ENCODE measurements at regions of chr14 and their contacts with region 1.

Region 1: GRCh38 chr14:53539489-53540126 is 386.5 kb upstream of the DDHD1 start:
- DNase-seq: peak; percentile 82 to 94 (median 89)
- H3K4me3 ChIP-seq: no peak overlapping the region
- H3K27ac ChIP-seq: no peak overlapping the region
- H3K4me1 ChIP-seq: peaks cover 0 to 4% (median 3%) of the 10 kb centered on the region in 3 donors
- H3K27me3 ChIP-seq: no peaks in the 10 kb centered on the region
- CTCF ChIP-seq: peak; percentile 88

Region 2: DNA sequence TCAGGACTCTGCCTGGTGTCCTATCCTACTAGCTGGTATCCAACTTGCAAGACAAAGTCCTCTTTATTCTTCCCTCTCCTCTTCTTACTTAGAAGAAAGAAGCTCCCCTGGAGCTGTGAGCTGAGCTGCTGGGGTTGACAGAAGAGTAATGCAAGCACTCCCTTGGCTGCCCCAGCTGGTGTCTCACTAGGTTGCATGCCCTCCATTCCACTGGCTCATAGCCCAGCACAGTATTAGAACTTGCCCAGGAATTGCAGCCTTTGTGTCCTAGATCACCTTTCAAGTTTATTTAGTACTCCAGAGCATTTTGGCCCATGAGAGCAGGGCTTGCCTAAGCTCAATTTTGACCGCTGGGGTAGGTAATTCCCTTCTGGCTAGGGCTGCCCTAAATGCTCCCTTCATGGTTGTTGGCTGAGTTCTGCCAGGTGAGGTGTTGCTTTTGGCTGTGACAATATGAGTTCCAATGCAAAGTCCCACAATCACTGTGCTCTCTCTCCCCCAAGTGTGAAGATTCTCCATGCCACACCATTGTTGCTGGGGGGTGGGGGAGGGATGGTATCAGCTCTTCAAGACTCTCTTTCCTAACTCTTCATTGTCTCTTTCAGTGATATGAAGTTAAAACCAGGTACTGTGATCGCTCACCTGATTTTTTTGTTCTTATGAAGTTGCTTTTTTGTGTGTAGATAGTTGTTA is 69.1 kb before region 1 on chr14:
- intact Hi-C with region 1: no loop called
- DNase-seq: no peak
- H3K4me3 ChIP-seq: no peak overlapping the region
- H3K27ac ChIP-seq: no peak overlapping the region
- H3K4me1 ChIP-seq: no peaks in the 10 kb centered on the region
- H3K27me3 ChIP-seq: no peaks in the 10 kb centered on the region
- CTCF ChIP-seq: no peak

Region 3: DNA sequence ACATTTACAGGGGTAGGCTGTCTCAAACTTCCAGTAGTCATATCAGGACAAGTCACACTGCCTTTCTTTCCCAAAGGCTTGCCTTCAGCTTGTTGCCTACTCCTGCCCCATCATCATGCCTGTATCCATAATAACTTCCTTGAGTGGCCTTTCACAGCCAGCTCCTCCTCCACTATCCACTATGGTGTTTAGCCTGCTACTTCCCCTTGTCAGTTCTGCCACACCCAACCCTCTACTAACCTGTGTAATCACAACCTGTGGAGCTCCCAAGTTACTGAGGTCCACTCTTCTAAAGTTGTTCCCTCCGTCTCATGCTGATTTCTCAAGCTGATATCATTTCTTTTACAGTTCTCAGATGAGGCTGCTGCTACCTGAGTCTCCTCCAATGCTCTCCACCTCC is 257.1 kb after region 1 on chr14:
- intact Hi-C with region 1: no loop called
- DNase-seq: no peak
- H3K4me3 ChIP-seq: no peak overlapping the region
- H3K27ac ChIP-seq: no peak overlapping the region
- H3K4me1 ChIP-seq: no peaks in the 10 kb centered on the region
- H3K27me3 ChIP-seq: no peaks in the 10 kb centered on the region
- CTCF ChIP-seq: no peak

Region 4: GRCh38 chr14:54347997-54348611 is 808.5 kb after region 1 on chr14:
- intact Hi-C with region 1: loop called (anchors 10 kb)
- DNase-seq: peak in 2 of 5 donors; percentile 84 to 87
- H3K4me3 ChIP-seq: no peak overlapping the region
- H3K27ac ChIP-seq: no peak overlapping the region
- H3K4me1 ChIP-seq: peaks cover 0 to 9% (median 3%) of the 10 kb centered on the region in 3 donors
- H3K27me3 ChIP-seq: no peaks in the 10 kb centered on the region
- CTCF ChIP-seq: peak; percentile 70